Activated T-helper 2 cell treated with anti-CD3 and anti-CD28 coated beads, Interferon-gamma antibody, Interleukin-2, Interleukin-4, amounts not matched to agents 10 μg/mL and 5 μg/mL and 100 μg/mL, durations not matched to agents 14 hours and 24 hours and 36 hours (primary cell): ENCODE measurements at regions of chr3 and their contacts with region 1.

Region 1: DNA sequence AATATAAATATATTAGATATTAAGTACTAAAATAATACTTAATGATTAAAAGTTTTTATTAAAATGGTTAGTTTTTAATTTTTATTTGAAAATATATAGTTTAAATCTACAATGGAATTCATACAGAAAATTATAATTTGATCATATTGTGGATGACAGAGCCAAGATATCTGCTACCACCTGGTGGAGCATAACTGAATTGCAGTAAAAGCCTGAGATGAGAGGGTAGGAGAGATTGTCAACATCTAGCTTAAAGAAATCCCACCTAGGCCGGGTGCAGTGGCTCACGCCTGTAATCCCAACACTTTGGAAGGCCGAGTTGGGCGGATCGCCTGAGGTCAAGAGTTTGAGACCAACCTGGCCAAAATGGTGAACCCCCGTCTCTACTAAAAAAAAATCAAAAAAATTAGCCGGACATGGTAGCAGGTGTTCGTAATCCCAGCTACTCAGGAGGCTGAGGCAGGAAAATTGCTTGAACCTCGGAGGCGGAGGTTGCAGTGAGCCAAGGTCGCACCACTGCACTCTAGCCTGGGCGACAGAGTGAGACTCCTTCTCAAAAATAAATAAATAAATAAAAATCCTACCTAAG is 25.1 kb upstream of the CSTA start:
- DNase-seq: no peak
- H3K4me3 Mint-ChIP-seq: no peak overlapping the region
- H3K27ac Mint-ChIP-seq: no peak overlapping the region
- H3K4me1 Mint-ChIP-seq: peaks cover 24% of the 10 kb centered on the region
- H3K27me3 Mint-ChIP-seq: peaks cover 1% of the 10 kb centered on the region

Region 2: DNA sequence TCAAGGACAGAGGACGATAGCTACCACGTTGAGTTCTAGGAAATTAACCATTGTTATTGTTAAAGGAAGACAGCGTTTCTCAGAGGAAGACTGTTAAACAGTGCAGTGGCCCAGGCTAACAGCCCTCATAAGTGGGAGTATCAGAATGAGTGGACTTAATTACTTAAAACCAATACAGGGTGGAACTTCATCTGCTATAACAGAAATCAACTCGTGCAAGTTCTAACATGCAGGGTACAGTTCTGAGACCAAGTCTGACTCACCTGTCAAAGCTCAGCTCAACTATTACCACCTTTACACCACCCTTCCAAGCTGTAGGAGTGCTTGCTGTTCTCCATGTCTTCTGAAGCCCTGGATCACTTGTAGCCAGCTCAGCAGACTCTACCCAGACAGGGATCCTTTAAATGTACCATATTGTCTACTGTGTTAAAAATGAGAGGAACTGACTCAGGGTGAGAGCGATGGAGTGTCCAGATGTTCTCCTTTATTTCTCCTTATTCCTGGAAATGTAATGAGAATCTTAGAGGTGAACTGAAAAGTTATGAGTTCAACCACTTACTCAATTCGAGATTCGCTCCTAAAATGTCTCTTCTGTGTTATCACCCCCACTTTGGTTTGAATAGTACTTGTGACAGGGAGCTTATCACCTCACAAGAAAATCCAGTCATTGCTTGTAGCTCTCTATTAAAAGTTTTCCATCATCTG is 218.3 kb before region 1 on chr3:
- intact Hi-C with region 1: no loop called
- DNase-seq: no peak
- H3K4me3 Mint-ChIP-seq: no peak overlapping the region
- H3K27ac Mint-ChIP-seq: peak overlapping the region; percentile 74
- H3K4me1 Mint-ChIP-seq: peaks cover 85% of the 10 kb centered on the region
- H3K27me3 Mint-ChIP-seq: no peaks in the 10 kb centered on the region

Region 3: DNA sequence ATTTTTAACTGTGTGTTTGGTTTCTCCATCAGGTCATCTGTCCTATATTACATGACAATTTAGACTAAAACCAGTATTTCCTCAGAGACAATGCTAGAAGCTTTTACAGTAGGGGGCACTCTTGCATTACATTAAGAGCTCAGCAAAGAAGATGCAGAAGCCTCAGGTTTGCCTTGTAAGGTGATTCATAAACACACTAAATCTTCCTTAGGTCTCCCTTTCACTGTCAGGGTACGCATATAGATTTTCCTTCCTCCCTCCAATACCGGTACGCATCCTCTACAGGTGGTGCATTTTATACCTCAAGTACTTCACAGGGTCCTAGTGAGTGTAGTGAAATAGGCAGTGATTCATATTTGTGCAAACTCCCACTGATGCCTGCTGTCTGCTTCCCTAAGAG is 198.3 kb before region 1 on chr3:
- intact Hi-C with region 1: loop called (anchors 1 kb)
- DNase-seq: no peak
- H3K4me3 Mint-ChIP-seq: no peak overlapping the region
- H3K27ac Mint-ChIP-seq: peak overlapping the region; percentile 62
- H3K4me1 Mint-ChIP-seq: peaks cover 38% of the 10 kb centered on the region
- H3K27me3 Mint-ChIP-seq: no peaks in the 10 kb centered on the region

Region 4: DNA sequence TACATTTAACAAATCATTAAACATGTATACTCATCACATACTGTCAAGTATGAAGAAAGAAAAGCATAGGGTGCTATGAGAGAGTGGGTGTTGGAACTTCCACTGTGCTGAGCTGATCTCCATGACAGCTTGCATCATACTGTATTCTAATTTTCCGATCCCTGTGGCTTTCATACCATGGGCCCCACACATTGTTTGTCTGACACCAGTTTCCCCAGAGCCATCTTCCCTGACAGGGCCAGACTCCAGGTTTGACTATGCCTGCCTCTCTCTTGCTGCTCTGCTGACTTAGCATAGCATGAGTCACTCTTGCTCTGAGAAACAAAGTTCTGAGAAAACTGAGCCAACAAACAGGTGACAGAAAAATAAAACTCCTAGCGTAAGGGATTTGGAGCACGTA is 153.5 kb before region 1 on chr3:
- intact Hi-C with region 1: loop called (anchors 1 kb)
- DNase-seq: peak; percentile 56
- H3K4me3 Mint-ChIP-seq: no peak overlapping the region
- H3K27ac Mint-ChIP-seq: peak overlapping the region; percentile 46
- H3K4me1 Mint-ChIP-seq: peaks cover 31% of the 10 kb centered on the region
- H3K27me3 Mint-ChIP-seq: no peaks in the 10 kb centered on the region

Region 5: GRCh38 chr3:122251428-122251827 is 48.5 kb before region 1 on chr3:
- intact Hi-C with region 1: no loop called
- DNase-seq: no peak
- H3K4me3 Mint-ChIP-seq: no peak overlapping the region
- H3K27ac Mint-ChIP-seq: no peak overlapping the region
- H3K4me1 Mint-ChIP-seq: peaks cover 19% of the 10 kb centered on the region
- H3K27me3 Mint-ChIP-seq: peaks cover 2% of the 10 kb centered on the region

Region 6: DNA sequence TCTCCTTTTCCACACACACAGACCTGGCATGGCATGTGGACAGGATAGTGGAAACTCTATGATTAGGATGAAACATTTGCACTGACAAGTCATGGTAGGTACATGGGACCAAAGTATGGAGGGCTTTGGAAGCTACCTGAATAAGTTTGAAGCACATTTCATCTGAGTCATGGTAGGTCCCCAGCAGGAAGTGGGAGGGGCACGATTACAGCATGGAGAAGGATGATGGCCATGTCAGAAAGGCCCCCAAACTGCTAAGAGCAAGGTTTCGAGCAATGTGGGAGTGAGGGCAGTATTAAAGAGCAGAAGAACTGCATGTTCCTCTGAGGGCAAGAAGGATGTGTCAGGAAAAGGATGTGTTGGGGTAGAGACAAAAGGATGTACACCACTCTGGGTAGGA is 26.5 kb before region 1 on chr3:
- intact Hi-C with region 1: loop called (anchors 2 kb)
- DNase-seq: no peak
- H3K4me3 Mint-ChIP-seq: no peak overlapping the region
- H3K27ac Mint-ChIP-seq: no peak overlapping the region
- H3K4me1 Mint-ChIP-seq: peaks cover 32% of the 10 kb centered on the region
- H3K27me3 Mint-ChIP-seq: peaks cover 7% of the 10 kb centered on the region

Region 7: GRCh38 chr3:122283796-122284445 is 16.0 kb before region 1 on chr3:
- intact Hi-C with region 1: no loop called
- DNase-seq: no peak
- H3K4me3 Mint-ChIP-seq: no peak overlapping the region
- H3K27ac Mint-ChIP-seq: no peak overlapping the region
- H3K4me1 Mint-ChIP-seq: no peaks in the 10 kb centered on the region
- H3K27me3 Mint-ChIP-seq: peaks cover 36% of the 10 kb centered on the region

Region 8: DNA sequence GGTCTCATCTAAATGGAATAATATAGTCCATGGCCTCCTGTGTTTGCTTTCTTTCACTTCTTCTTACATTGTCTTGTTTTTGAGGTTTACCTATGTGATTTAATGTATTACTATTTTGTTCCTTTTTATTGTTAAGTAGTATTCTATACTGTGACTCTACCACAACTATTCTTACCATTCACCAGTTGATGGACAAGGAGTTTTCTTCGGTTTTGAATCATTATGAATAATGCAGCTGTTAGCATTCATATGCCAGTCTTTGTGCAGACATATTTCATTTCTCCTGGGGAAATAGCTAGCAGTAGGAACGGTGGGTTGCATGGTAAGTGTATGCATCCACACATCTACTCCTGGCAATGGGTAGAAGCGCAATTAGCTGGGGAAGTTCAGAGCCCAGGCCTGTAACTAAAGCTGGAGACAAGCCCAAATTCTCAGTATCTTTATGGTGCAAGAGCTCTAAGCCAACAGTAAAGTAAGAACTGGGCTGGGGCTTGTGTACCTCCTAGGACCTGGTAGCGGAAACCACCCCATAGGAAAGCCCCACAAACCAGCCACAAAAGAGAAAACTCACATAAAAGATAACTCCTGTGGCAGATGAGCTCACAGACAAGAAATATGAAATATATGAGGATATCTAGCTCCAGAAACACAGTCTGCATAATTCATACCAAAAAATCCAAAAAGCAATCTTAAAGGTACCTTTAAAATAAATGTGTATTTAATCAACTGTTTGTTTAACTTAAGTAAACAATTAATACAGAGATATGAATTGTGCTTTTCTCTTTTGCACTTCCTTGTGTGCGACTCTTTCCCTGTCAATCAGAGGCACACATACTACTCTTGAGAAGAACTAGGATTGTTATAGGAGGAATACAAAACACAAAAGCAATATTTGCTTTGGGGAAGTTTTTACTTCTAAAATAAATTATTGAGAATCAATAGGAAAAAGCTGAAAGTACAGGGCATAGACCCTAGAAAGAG is 22.4 kb after region 1 on chr3:
- intact Hi-C with region 1: loop called (anchors 1 kb)
- DNase-seq: peak; percentile 40
- H3K4me3 Mint-ChIP-seq: no peak overlapping the region
- H3K27ac Mint-ChIP-seq: peak overlapping the region; percentile 47
- H3K4me1 Mint-ChIP-seq: peaks cover 32% of the 10 kb centered on the region
- H3K27me3 Mint-ChIP-seq: peaks cover 20% of the 10 kb centered on the region

Region 9: DNA sequence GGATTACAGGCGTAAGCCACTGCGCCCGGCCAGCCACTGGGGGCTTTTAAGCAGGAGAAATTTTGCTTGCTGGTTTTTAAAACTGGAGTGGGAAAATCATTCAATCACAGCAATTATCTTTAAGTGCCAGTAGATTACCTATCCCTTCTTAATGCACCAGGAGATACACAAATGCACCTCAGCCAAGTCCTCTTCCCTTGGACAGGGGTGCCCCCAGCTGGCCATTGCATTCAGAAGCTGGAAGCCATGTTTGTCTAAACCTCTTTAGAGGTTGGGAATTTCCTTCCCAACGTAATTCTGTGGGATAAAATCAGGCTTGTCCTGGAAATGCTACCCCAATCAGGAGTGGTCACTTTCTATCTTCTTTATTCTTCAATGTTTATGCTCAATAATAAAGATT is 56.4 kb after region 1 on chr3:
- intact Hi-C with region 1: loop called (anchors 1 kb)
- DNase-seq: no peak
- H3K4me3 Mint-ChIP-seq: no peak overlapping the region
- H3K27ac Mint-ChIP-seq: no peak overlapping the region
- H3K4me1 Mint-ChIP-seq: peaks cover 2% of the 10 kb centered on the region
- H3K27me3 Mint-ChIP-seq: no peaks in the 10 kb centered on the region